H1 (cell line): ENCODE measurements at regions of chr2 and their contacts with region 1.

Region 1: GRCh38 chr2:37896314-37896713 is 28.8 kb upstream of the RMDN2 start:
- DNase-seq: no peak
- H3K4me3 ChIP-seq: no peak overlapping the region
- H3K27ac ChIP-seq: no peak overlapping the region
- H3K4me1 ChIP-seq: no peaks in the 10 kb centered on the region
- H3K27me3 ChIP-seq: no peaks in the 10 kb centered on the region
- CTCF ChIP-seq: peak; percentile 13 to 49 (median 43)
- EP300 ChIP-seq: no peak
- POLR2A ChIP-seq: no peak
- RAD21 ChIP-seq: peak; percentile 61 to 79

Region 2: GRCh38 chr2:37740164-37740739 is 156.1 kb before region 1 on chr2:
- CTCF ChIA-PET with region 1: no interaction called
- POLR2A ChIA-PET with region 1: no interaction called
- DNase-seq: no peak
- H3K4me3 ChIP-seq: no peak overlapping the region
- H3K27ac ChIP-seq: no peak overlapping the region
- H3K4me1 ChIP-seq: no peaks in the 10 kb centered on the region
- H3K27me3 ChIP-seq: no peaks in the 10 kb centered on the region
- CTCF ChIP-seq: no peak
- EP300 ChIP-seq: no peak
- POLR2A ChIP-seq: no peak
- RAD21 ChIP-seq: no peak

Region 3: GRCh38 chr2:37767956-37768925 is 128.1 kb before region 1 on chr2:
- CTCF ChIA-PET with region 1: no interaction called
- POLR2A ChIA-PET with region 1: no interaction called
- DNase-seq: no peak
- H3K4me3 ChIP-seq: no peak overlapping the region
- H3K27ac ChIP-seq: no peak overlapping the region
- H3K4me1 ChIP-seq: no peaks in the 10 kb centered on the region; a peak in 1 of 7 replicates
- H3K27me3 ChIP-seq: no peaks in the 10 kb centered on the region
- CTCF ChIP-seq: no peak
- EP300 ChIP-seq: no peak
- POLR2A ChIP-seq: no peak
- RAD21 ChIP-seq: no peak

Region 4: GRCh38 chr2:37885329-37885993 is 10.9 kb before region 1 on chr2:
- CTCF ChIA-PET with region 1: interaction called, 91 read pairs
- POLR2A ChIA-PET with region 1: no interaction called
- DNase-seq: no peak
- H3K4me3 ChIP-seq: no peak overlapping the region; a peak in 2 of 8 replicates
- H3K27ac ChIP-seq: no peak overlapping the region
- H3K4me1 ChIP-seq: peaks cover 4 to 14% (median 7%) of the 10 kb centered on the region in 4 experiments; a peak in 5 of 7 replicates
- H3K27me3 ChIP-seq: no peaks in the 10 kb centered on the region
- CTCF ChIP-seq: no peak
- EP300 ChIP-seq: no peak
- POLR2A ChIP-seq: no peak
- RAD21 ChIP-seq: no peak